Heart right ventricle (tissue), 16 donors: ENCODE measurements at regions of chr2 and their contacts with region 1.

Region 1: DNA sequence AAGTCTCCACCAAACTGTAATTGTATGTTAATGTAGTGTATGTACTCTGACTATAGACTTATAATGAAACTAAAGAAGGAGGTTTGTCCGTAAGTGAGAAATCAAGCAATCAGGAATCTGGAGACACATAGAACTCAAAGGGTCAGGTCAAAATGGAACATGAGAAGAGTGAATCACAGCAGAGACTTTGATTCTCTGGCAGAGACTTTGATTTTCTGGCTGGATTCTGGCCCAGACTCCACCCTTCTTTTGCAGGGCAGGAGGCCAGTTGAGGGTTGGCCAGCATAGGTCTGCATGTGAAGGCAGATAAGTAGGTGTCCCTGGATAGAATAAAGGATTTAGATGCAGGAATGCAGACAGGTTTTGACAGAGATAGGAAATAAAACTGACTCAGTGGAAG is 11.0 kb upstream of the NCKAP5 start:
- DNase-seq: peak; percentile 44 to 61
- ATAC-seq: peak; percentile 66 to 92 (median 89)
- H3K4me3 ChIP-seq: no peak overlapping the region
- H3K27ac ChIP-seq: peak overlapping the region in 4 of 10 donors; percentile 42 to 67 (median 52)
- H3K4me1 ChIP-seq: peaks cover 0 to 29% (median 15%) of the 10 kb centered on the region in 9 donors
- H3K27me3 ChIP-seq: no peaks in the 10 kb centered on the region
- CTCF ChIP-seq: no peak

Region 2: DNA sequence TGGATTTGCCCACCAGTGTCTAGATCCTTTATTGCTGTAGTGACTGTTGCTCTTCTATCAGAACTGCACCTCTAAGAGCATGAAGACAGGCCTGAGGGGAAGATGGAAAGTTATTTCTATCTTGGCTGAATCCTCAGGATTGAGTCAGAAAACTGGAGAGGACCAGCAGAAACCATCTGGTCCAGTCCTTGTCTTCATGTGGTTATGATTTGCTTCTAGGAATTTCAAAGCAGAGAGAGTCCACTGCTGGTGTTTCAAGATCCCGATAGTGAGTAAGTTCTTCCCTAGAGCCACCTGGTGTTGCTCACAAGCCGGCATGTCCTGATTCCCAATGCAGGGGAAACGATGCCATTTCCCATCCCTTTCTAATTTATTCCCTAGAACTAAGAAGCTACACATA is 95.2 kb before region 1 on chr2:
- intact Hi-C with region 1: no loop called
- DNase-seq: no peak
- ATAC-seq: peak in 4 of 8 donors; percentile 44 to 71 (median 50)
- H3K4me3 ChIP-seq: no peak overlapping the region
- H3K27ac ChIP-seq: no peak overlapping the region
- H3K4me1 ChIP-seq: peaks cover 0 to 4% (median 0%) of the 10 kb centered on the region in 9 donors
- H3K27me3 ChIP-seq: no peaks in the 10 kb centered on the region
- CTCF ChIP-seq: no peak

Region 3: DNA sequence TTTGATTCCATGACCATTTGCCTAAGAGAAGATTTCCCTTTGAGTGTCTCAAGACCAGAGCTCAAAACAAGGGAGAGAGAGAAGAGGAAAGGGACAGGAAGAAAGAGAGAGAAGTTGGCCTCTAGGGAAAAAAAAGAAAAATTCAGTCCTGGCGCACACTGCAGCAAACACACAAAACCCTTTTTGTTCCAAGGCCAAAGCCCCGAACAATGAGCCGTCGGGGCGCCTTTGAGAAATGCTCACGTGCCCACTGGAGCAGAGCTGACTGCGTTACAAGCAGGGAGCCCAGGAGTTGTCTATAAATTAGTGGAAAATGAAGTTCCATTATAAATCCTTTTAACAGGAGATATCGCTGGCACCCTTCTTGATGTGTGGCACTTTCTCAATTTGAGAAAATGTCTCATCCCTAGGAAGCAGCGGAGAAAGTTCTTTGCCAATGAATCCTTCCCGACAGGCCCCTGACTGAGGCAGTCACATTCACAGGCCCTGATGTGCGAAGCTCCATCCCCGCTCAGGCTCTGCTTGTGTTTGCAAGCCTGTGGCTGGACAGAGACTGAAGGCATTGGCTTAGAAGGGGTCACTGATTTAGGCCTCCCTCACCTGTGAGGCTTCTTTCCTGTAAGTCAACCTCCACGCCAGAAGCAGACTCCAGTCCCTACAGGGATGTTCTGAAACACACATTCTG is 21.1 kb after region 1 on chr2:
- intact Hi-C with region 1: loop called in 1 of 10 experiments (anchors 2 kb)
- DNase-seq: no peak
- ATAC-seq: no peak
- H3K4me3 ChIP-seq: no peak overlapping the region
- H3K27ac ChIP-seq: no peak overlapping the region
- H3K4me1 ChIP-seq: peaks cover 5 to 41% (median 19%) of the 10 kb centered on the region in 9 donors
- H3K27me3 ChIP-seq: no peaks in the 10 kb centered on the region
- CTCF ChIP-seq: no peak